Mammary epithelial cell (primary cell): ENCODE measurements at regions of chr4 and their contacts with region 1.

Region 1: GRCh38 chr4:17810260-17811077 is at the starts of genes DCAF16 and NCAPG:
- DNase-seq: peak; percentile 99
- H3K4me3 ChIP-seq: peak within 1 kb of the TSS; percentile 82 to 90 (median 83)
- H3K27ac ChIP-seq: peak within 1 kb of the TSS; percentile 91
- H3K4me1 ChIP-seq: peaks cover 21% of the 10 kb centered on the region
- H3K27me3 ChIP-seq: no peaks in the 10 kb centered on the region
- CTCF ChIP-seq: no peak
- total RNA-seq, gene DCAF16: 28.5 to 32.7 TPM
- total RNA-seq, gene NCAPG: 2.0 to 39.4 TPM

Region 2: GRCh38 chr4:17576932-17577665 is 233.4 kb before region 1 on chr4 and contains the start of gene LAP3:
- CTCF ChIA-PET with region 1: no interaction called
- dilution Hi-C with region 1: no loop called
- in situ Hi-C with region 1: loop called in 1 of 2 experiments (anchors 25 kb)
- intact Hi-C with region 1: loop called (anchors 1 kb)
- DNase-seq: peak; percentile 95
- H3K4me3 ChIP-seq: peak within 1 kb of the TSS; percentile 72 to 84 (median 72)
- H3K27ac ChIP-seq: peak within 1 kb of the TSS; percentile 89
- H3K4me1 ChIP-seq: peaks cover 6% of the 10 kb centered on the region
- H3K27me3 ChIP-seq: no peaks in the 10 kb centered on the region
- CTCF ChIP-seq: no peak
- total RNA-seq, gene LAP3: 36.1 to 69.5 TPM

Region 3: GRCh38 chr4:17597517-17597916 is 213.0 kb before region 1 on chr4:
- CTCF ChIA-PET with region 1: no interaction called
- dilution Hi-C with region 1: no loop called
- in situ Hi-C with region 1: loop called in 1 of 2 experiments (anchors 25 kb)
- intact Hi-C with region 1: loop called (anchors 1 kb)
- DNase-seq: peak; percentile 41
- H3K4me3 ChIP-seq: no peak overlapping the region
- H3K27ac ChIP-seq: no peak overlapping the region
- H3K4me1 ChIP-seq: no peaks in the 10 kb centered on the region
- H3K27me3 ChIP-seq: no peaks in the 10 kb centered on the region
- CTCF ChIP-seq: peak; percentile 41 to 56

Region 4: DNA sequence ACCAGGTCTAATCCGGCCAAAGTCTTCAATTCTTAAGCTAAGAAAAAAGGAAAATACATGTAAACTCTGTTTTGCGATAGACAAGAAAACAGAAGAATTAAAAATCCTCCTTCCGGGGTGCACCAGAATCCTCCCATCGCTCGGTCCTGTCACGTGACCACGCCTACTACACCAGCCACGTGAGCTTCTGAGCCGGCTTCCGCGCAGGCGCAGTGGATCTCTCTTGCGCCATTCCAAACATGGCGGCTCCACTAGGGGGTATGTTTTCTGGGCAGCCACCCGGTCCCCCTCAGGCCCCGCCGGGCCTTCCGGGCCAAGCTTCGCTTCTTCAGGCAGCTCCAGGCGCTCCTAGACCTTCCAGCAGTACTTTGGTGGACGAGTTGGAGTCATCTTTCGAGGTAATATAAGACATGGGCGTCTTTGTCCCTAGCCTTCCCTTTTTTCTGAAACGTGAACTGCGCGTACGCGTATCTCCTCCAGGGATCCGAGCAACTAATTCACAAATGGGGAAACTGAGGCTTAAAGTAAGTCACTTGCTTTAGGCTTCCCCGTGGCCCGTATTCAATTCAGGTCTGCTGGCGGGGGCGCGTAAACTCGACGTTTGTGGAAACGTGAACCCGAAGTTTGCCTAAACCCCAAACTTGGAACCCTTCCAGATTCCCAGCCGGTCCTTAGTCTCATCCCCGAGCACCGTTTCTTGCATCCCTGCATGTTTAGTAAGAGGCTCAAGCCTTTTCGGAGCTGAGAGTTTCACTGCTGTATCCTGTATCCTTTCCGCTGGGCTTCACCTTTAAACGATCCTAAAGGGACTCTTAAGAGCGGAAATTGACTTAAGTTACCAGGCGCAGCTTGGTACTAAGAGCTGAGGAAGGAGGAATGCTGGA is 195.8 kb before region 1 on chr4 and contains the start of gene MED28:
- CTCF ChIA-PET with region 1: no interaction called
- dilution Hi-C with region 1: no loop called
- in situ Hi-C with region 1: no loop called
- intact Hi-C with region 1: loop called (anchors 2 kb)
- DNase-seq: peak; percentile 89
- H3K4me3 ChIP-seq: peak within 1 kb of the TSS; percentile 59 to 93 (median 78)
- H3K27ac ChIP-seq: peak within 1 kb of the TSS; percentile 86
- H3K4me1 ChIP-seq: peaks cover 12% of the 10 kb centered on the region
- H3K27me3 ChIP-seq: no peaks in the 10 kb centered on the region
- CTCF ChIP-seq: no peak
- total RNA-seq, gene MED28: 10.7 to 30.8 TPM

Region 5: DNA sequence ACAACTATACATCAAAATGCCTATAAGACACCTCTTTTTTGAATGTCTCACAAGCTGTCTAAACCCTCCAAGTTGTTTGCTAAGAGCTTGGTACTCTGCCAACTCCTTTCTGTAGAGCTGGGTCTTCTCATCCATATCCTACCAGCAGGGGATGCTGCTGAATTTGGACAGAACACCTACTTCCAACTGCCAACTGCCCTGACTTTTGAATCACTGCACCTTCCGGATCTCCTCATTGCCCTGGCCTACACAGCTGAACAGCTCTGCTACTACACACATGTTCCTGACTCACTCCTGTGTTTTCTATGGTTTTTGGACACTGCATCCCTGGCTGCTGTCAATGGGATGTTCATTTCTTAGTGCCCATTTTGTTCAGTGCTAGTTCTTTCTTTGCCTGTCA is 47.7 kb before region 1 on chr4:
- CTCF ChIA-PET with region 1: interaction called, 4 read pairs
- dilution Hi-C with region 1: no loop called
- in situ Hi-C with region 1: no loop called
- intact Hi-C with region 1: loop called (anchors 1 kb)
- DNase-seq: peak; percentile 67
- H3K4me3 ChIP-seq: no peak overlapping the region
- H3K27ac ChIP-seq: no peak overlapping the region
- H3K4me1 ChIP-seq: no peaks in the 10 kb centered on the region
- H3K27me3 ChIP-seq: no peaks in the 10 kb centered on the region
- CTCF ChIP-seq: peak; percentile 54 to 78